ENCODE measurements at regions of chr6 and their contacts with region 1.

Region 1: GRCh38 chr6:4018172-4018905 is 60.6 kb downstream of the FAM217A start:
- DNase-seq: peak; percentile 99
- ATAC-seq: peak; percentile 65
- H3K4me3 Mint-ChIP-seq: peak overlapping the region; percentile 95
- H3K27ac Mint-ChIP-seq: peak overlapping the region; percentile 99
- H3K4me1 Mint-ChIP-seq: peaks cover 53% of the 10 kb centered on the region
- H3K27me3 Mint-ChIP-seq: no peaks in the 10 kb centered on the region

Region 2: GRCh38 chr6:3209114-3210023 is 809.0 kb before region 1 on chr6:
- CTCF ChIA-PET with region 1: no interaction called
- POLR2A ChIA-PET with region 1: interaction called, 3 read pairs
- intact Hi-C with region 1: loop called in 1 of 2 experiments (anchors 1 kb)
- DNase-seq: peak; percentile 80
- ATAC-seq: peak; percentile 87
- H3K4me3 Mint-ChIP-seq: peak overlapping the region; percentile 32
- H3K27ac Mint-ChIP-seq: peak overlapping the region; percentile 86
- H3K4me1 Mint-ChIP-seq: peaks cover 28% of the 10 kb centered on the region
- H3K27me3 Mint-ChIP-seq: peaks cover 34% of the 10 kb centered on the region

Region 3: DNA sequence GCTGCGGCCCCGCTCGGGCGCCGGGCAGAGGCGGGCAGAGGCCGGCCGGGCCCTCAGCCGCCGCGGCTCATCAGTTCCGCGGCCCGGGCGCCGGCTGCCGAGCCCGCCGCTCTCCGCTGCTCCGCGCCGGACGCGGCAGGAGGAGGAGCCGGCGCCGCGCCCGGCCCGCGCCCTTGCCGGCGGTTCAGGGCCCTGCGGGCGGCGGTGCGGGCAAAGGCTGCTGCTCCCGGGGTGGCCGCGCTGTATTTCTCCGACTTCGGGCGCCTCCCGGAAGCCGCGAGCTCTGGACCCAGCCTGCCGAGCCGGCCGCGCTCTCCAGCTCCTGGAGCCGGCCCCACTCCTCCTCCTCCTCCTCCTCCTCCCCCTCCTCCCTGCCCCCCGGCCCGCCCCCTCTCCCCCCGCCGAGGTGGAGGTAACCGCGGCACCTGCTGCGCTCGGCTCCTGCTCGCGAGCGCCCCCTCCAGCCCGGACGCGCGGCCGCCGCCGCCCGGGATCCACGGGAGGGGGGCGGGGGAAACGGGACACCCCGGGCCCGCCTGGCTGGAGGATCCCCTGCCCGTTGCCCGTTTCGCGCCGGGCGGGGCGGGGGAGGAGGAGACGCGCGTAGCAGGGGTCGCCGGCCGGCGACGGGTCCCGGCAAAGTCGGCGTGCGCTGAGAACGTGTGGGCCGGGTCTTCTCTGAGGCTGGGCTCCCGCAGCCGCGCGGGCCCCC is 561.4 kb before region 1 on chr6 and contains the start of gene SLC22A23:
- CTCF ChIA-PET with region 1: no interaction called
- POLR2A ChIA-PET with region 1: no interaction called
- intact Hi-C with region 1: loop called in 1 of 2 experiments (anchors 5 kb)
- DNase-seq: peak; percentile 84
- ATAC-seq: peak; percentile 67
- H3K4me3 Mint-ChIP-seq: peak within 1 kb of the TSS; percentile 70
- H3K27ac Mint-ChIP-seq: peak within 1 kb of the TSS; percentile 47
- H3K4me1 Mint-ChIP-seq: peaks cover 5% of the 10 kb centered on the region
- H3K27me3 Mint-ChIP-seq: peaks cover 23% of the 10 kb centered on the region
- total RNA-seq, gene SLC22A23: 0.37 to 0.39 TPM

Region 4: DNA sequence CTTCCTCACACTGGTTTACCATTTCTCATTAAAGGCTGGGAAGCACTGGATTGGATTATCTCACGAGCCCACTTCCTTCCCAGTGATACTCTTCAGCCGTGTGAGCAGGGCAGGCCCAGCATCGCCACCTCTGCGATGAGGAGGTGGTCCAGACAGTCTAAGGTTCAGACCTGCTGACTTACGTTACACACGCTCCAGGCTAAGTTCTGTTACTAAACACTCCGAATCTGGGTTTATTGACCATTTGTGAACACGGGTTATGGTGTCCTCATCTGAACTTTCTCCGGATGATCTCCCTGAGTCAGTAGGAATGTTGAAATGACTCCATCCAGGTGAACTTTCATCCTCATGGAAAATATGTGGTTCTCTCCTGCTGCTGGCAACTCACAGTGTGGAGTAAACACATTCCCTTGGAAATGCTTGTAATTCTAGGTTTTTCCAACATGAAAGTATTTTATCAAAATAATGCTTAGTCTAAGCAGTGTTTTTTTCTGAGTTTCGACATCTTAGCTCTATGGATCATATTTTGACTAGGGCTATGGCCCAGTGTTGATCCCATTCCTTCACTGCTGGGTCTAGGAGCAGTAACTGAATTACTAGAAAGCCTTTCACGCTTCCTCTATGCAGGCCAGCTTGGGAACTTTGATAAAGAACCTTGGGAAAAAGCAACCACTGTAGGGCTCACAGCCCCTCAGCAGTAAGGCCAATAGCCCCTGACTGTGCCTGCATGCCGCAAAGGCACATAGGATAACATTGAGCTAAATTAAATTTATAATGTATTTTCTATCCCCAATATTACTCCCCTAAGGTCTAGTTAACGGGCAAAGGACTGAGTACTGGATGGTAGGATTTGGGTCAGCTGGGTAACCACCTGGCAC is 229.1 kb before region 1 on chr6:
- CTCF ChIA-PET with region 1: no interaction called
- POLR2A ChIA-PET with region 1: no interaction called
- intact Hi-C with region 1: no loop called
- DNase-seq: no peak
- ATAC-seq: no peak
- H3K4me3 Mint-ChIP-seq: no peak overlapping the region
- H3K27ac Mint-ChIP-seq: no peak overlapping the region
- H3K4me1 Mint-ChIP-seq: no peaks in the 10 kb centered on the region
- H3K27me3 Mint-ChIP-seq: no peaks in the 10 kb centered on the region

Region 5: GRCh38 chr6:4055420-4056041 is 37.2 kb after region 1 on chr6:
- CTCF ChIA-PET with region 1: interaction called, 10 read pairs
- POLR2A ChIA-PET with region 1: interaction called, 13 read pairs
- intact Hi-C with region 1: loop called (anchors 1 to 2 kb)
- DNase-seq: peak; percentile 16
- ATAC-seq: no peak
- H3K4me3 Mint-ChIP-seq: no peak overlapping the region
- H3K27ac Mint-ChIP-seq: no peak overlapping the region
- H3K4me1 Mint-ChIP-seq: peaks cover 35% of the 10 kb centered on the region
- H3K27me3 Mint-ChIP-seq: no peaks in the 10 kb centered on the region

Region 6: DNA sequence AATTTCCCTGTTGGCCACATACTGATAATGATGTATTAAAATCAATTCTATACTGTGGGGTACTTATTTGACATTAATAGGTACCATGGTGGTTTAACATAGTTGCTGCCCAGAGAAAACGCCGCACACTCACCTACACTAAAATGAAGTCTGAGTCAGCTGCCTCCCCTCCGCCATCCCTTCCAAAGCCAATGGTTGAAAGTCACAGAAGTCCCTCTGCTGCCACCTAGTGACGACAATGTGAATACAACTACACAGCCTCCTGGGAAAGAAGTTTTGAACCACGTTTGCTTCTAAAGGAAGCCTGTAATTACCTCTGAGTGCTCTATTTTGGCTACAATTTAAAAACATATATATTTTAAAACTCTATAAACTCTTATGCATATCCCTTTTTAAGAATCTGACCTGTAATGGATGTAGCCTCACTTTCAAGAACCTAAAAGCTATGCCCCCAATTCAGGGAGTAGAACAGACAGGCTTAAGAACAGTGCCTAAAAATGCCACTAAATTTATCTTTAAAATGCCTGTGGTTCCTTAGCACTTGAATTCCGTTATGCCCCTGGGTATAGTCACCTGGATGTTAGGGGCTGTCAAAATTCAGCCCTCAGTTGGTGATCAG is 137.6 kb after region 1 on chr6:
- CTCF ChIA-PET with region 1: interaction called, 5 read pairs
- POLR2A ChIA-PET with region 1: no interaction called
- intact Hi-C with region 1: loop called in 1 of 2 experiments (anchors 5 kb)
- DNase-seq: peak; percentile 88
- ATAC-seq: peak; percentile 99
- H3K4me3 Mint-ChIP-seq: no peak overlapping the region
- H3K27ac Mint-ChIP-seq: no peak overlapping the region
- H3K4me1 Mint-ChIP-seq: peaks cover 7% of the 10 kb centered on the region
- H3K27me3 Mint-ChIP-seq: no peaks in the 10 kb centered on the region

Region 7: DNA sequence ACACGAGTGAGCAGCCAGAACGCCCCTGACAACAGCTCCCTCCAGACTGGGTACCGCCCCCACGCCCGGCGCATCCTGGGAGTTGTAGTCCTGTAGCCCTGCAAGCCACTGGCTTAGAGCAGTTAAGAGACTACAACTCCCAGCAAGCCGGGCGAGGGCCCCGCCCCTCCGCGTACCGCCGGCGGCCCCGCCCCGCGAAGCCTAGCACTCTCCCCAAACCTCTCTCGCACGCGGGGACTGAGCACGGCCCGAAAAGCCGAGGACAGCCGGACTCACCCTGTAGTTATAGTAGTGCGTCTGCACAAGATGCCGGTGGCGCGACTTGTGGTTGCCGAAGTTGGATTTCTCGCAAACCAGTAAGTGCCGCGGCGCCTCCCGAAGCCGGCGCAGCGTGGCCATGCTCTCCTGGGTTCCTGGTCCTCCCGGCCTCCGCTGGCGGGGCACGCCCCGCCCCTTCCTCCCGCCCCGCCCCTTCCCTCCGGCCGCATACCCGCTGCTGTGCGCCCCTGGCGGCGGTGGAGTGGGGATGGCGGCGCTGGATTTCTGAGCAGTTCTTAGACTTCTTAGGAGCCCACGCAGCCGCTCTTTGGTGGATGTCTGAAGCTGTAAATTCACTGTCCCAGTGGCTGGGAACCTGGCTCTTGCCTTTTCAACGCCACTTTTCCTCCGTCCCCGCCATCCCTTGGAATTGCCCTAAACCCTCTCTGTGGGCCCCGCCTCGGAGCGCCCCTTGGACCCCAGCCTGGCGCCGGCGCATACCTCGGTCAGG is 985.4 kb after region 1 on chr6 and contains the start of gene RPP40:
- CTCF ChIA-PET with region 1: no interaction called
- POLR2A ChIA-PET with region 1: no interaction called
- intact Hi-C with region 1: loop called in 1 of 2 experiments (anchors 2 kb)
- DNase-seq: peak; percentile 99
- ATAC-seq: peak; percentile 97
- H3K4me3 Mint-ChIP-seq: peak within 1 kb of the TSS; percentile 87
- H3K27ac Mint-ChIP-seq: peak within 1 kb of the TSS; percentile 94
- H3K4me1 Mint-ChIP-seq: peaks cover 8% of the 10 kb centered on the region
- H3K27me3 Mint-ChIP-seq: no peaks in the 10 kb centered on the region
- total RNA-seq, gene RPP40: 7.7 to 11.2 TPM